Left lung (tissue), 14 donors: ENCODE measurements at regions of chr20 and their contacts with region 1.

Region 1: DNA sequence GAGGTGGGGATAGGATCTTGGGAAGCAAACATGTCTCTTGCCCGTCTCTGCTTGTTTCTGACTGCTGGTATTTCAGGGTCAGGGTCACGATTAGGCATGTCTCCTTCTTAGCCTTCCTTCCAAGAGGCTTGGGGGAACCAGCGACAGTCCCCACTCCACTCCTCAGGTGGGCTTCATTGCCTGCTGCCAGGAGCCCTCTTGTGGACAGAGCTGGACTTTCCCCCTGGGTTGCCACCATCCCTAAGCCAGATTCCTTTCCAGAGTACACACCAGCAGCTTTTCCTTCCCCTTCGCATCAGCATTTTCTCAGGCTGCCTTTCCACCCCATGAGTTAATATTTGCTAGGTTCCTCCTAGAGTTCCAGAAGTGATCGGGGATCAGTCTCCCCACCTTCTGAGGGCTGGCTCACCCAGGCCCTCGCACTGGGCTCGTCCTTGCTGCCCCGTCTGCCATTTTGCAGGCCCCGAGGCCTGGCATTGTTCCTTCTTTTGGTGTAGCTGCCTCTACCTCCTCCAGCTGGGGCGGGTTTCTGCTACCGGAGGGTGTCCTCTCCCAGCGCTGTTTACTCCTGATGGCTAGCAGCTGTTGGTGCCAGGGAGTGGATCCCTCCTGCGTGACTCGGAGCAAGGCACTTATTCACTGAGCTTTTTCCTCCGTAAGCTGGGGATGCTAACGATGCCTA is 8.8 kb upstream of the C20orf144 start:
- DNase-seq: peak in 2 of 4 donors; percentile 40 to 79
- ATAC-seq: peak; percentile 58
- H3K4me3 ChIP-seq: no peak overlapping the region
- H3K27ac ChIP-seq: no peak overlapping the region
- H3K4me1 ChIP-seq: peaks cover 8 to 10% of the 10 kb centered on the region in 2 donors
- H3K27me3 ChIP-seq: no peaks in the 10 kb centered on the region
- CTCF ChIP-seq: peak; percentile 61 to 76

Region 2: GRCh38 chr20:33460711-33461110 is 192.6 kb before region 1 on chr20:
- intact Hi-C with region 1: loop called in 1 of 2 experiments (anchors 5 kb)
- DNase-seq: no peak
- ATAC-seq: no peak
- H3K4me3 ChIP-seq: no peak overlapping the region
- H3K27ac ChIP-seq: no peak overlapping the region
- H3K4me1 ChIP-seq: no peaks in the 10 kb centered on the region
- H3K27me3 ChIP-seq: no peaks in the 10 kb centered on the region
- CTCF ChIP-seq: no peak